WTC11 (cell line): ENCODE measurements at regions of chr2 and their contacts with region 1.

Region 1: GRCh38 chr2:50333529-50334228 is 698.3 kb downstream of the NRXN1 start:
- DNase-seq: no peak
- ATAC-seq: no peak
- H3K4me3 Mint-ChIP-seq: no peak overlapping the region
- H3K27ac Mint-ChIP-seq: no peak overlapping the region
- H3K4me1 Mint-ChIP-seq: peaks cover 40% of the 10 kb centered on the region
- H3K27me3 Mint-ChIP-seq: no peaks in the 10 kb centered on the region
- CTCF ChIP-seq: no peak

Region 2: GRCh38 chr2:50284188-50284587 is 49.5 kb before region 1 on chr2:
- CTCF ChIA-PET with region 1: no interaction called
- POLR2A ChIA-PET with region 1: no interaction called
- DNase-seq: no peak
- ATAC-seq: no peak
- H3K4me3 Mint-ChIP-seq: no peak overlapping the region
- H3K27ac Mint-ChIP-seq: no peak overlapping the region
- H3K4me1 Mint-ChIP-seq: no peaks in the 10 kb centered on the region; the same call in 1 of the 2 replicates
- H3K27me3 Mint-ChIP-seq: no peaks in the 10 kb centered on the region
- CTCF ChIP-seq: no peak

Region 3: GRCh38 chr2:50347358-50348044 is 13.8 kb after region 1 on chr2:
- CTCF ChIA-PET with region 1: interaction called, 23 read pairs
- POLR2A ChIA-PET with region 1: interaction called, 4 read pairs
- DNase-seq: peak; percentile 55
- ATAC-seq: peak; percentile 58
- H3K4me3 Mint-ChIP-seq: peak overlapping the region; percentile 84
- H3K27ac Mint-ChIP-seq: no peak overlapping the region
- H3K4me1 Mint-ChIP-seq: peaks cover 33% of the 10 kb centered on the region
- H3K27me3 Mint-ChIP-seq: peaks cover 60% of the 10 kb centered on the region
- CTCF ChIP-seq: no peak

Region 4: GRCh38 chr2:50358586-50358985 is 24.9 kb after region 1 on chr2:
- CTCF ChIA-PET with region 1: no interaction called
- POLR2A ChIA-PET with region 1: no interaction called
- DNase-seq: no peak
- ATAC-seq: no peak
- H3K4me3 Mint-ChIP-seq: no peak overlapping the region
- H3K27ac Mint-ChIP-seq: no peak overlapping the region
- H3K4me1 Mint-ChIP-seq: no peaks in the 10 kb centered on the region
- H3K27me3 Mint-ChIP-seq: peaks cover 3% of the 10 kb centered on the region; the same call in 1 of the 2 replicates
- CTCF ChIP-seq: no peak

Region 5: GRCh38 chr2:50729306-50730049 is 395.8 kb after region 1 on chr2:
- CTCF ChIA-PET with region 1: no interaction called
- POLR2A ChIA-PET with region 1: no interaction called
- DNase-seq: no peak
- ATAC-seq: peak; percentile 88
- H3K4me3 Mint-ChIP-seq: 0 out of 2 replicates have a peak overlapping the region, but pooled peaks have one; percentile 3
- H3K27ac Mint-ChIP-seq: peak overlapping the region; percentile 75
- H3K4me1 Mint-ChIP-seq: peaks cover 17% of the 10 kb centered on the region
- H3K27me3 Mint-ChIP-seq: no peaks in the 10 kb centered on the region
- CTCF ChIP-seq: no peak